ENCODE measurements at regions of chr20 and their contacts with region 1.

Region 1: DNA sequence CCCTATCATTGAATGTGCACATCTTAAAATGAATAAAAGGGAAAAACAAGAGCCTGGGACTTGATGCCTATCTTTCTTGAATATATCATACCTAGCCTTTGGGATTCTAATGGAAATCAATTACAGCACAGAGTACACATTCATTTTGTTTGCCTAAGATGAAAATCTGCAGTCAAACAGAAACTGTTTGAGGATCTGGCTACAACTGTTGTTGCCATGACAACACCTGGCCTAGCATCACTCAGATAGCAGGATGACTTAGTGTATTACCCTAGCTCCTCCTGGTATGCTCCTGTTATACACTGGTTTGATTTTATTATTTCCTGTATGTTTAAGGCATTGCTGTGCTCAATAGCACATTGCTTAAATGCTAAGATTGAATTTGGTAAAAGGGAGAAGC is 71.5 kb upstream of the LAMP5 start:
- DNase-seq: no peak
- H3K4me3 ChIP-seq: no peak overlapping the region
- H3K27ac ChIP-seq: no peak overlapping the region
- H3K4me1 ChIP-seq: no peaks in the 10 kb centered on the region
- H3K27me3 ChIP-seq: no peaks in the 10 kb centered on the region
- CTCF ChIP-seq: no peak
- POLR2A ChIP-seq: no peak

Region 2: GRCh38 chr20:9458138-9458796 is 15.4 kb after region 1 on chr20:
- CTCF ChIA-PET with region 1: interaction called, 23 read pairs
- POLR2A ChIA-PET with region 1: no interaction called
- dilution Hi-C with region 1: no loop called
- intact Hi-C with region 1: no loop called
- DNase-seq: no peak
- H3K4me3 ChIP-seq: no peak overlapping the region
- H3K27ac ChIP-seq: no peak overlapping the region
- H3K4me1 ChIP-seq: peaks cover 13% of the 10 kb centered on the region
- H3K27me3 ChIP-seq: no peaks in the 10 kb centered on the region
- CTCF ChIP-seq: peak; percentile 22 to 36
- POLR2A ChIP-seq: no peak